Activated T-helper 1 cell treated with anti-CD3 and anti-CD28 coated beads, Interleukin-12 subunit alpha, Interleukin-12 subunit beta, Interleukin-2, Interleukin-4 antibody, amounts not matched to agents 30 ng/mL and 10 ng/mL and 1 ng/mL, durations not matched to agents 14 hours and 24 hours and 36 hours (primary cell): ENCODE measurements at regions of chr16 and their contacts with region 1.

Region 1: DNA sequence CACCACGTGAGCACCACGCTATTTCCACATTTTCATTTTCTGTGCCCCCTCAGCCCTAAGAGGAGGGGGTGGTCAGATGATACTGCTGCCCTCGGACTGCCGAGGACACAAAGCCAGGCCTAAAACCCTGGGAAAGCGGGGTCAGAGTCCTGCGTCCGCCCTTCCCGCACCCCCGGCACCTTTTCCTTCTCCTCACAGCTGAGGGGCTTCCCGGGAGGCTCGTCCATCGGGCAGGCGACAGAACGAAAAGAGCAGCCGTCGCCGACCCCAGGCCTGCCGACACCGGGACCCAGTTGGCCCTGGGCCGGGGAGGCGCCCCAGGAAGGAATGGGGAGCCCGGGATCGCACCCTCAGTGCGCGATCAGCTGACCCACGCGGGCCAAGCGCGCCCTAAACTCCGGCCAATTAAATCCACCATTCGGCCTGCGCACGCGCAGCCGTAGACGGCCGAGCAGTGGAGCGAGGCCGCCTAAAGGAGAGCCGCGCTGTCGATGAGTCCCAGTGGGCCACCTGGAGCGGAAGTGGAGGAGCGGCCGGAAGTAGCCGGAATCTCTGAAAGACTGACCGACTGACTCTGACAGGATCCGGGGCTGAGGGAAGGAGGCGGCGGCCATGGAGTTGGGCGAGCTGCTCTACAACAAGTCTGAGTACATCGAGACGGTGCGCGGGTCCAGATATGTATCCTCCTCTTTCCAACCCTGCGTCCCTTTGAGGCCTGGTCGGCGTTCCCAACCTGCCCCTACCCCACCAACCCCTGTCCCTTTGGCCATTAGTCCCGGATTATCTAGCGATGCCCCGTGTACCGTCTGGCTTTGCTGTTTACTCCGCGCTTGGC is at the starts of genes DCTN5 and PALB2:
- DNase-seq: peak; percentile 90
- H3K4me3 Mint-ChIP-seq: peak within 1 kb of the TSS; percentile 98
- H3K27ac Mint-ChIP-seq: peak within 1 kb of the TSS; percentile 97
- H3K4me1 Mint-ChIP-seq: peaks cover 31% of the 10 kb centered on the region
- H3K27me3 Mint-ChIP-seq: no peaks in the 10 kb centered on the region
- total RNA-seq, gene DCTN5: 102 and 105 TPM in 2 replicates
- total RNA-seq, gene PALB2: 34.4 and 36.2 TPM in 2 replicates

Region 2: GRCh38 chr16:23504451-23505179 is 136.5 kb before region 1 on chr16:
- intact Hi-C with region 1: loop called (anchors 2 kb)
- DNase-seq: peak; percentile 68
- H3K4me3 Mint-ChIP-seq: peak overlapping the region; percentile 46
- H3K27ac Mint-ChIP-seq: peak overlapping the region; percentile 79
- H3K4me1 Mint-ChIP-seq: peaks cover 72% of the 10 kb centered on the region
- H3K27me3 Mint-ChIP-seq: no peaks in the 10 kb centered on the region

Region 3: DNA sequence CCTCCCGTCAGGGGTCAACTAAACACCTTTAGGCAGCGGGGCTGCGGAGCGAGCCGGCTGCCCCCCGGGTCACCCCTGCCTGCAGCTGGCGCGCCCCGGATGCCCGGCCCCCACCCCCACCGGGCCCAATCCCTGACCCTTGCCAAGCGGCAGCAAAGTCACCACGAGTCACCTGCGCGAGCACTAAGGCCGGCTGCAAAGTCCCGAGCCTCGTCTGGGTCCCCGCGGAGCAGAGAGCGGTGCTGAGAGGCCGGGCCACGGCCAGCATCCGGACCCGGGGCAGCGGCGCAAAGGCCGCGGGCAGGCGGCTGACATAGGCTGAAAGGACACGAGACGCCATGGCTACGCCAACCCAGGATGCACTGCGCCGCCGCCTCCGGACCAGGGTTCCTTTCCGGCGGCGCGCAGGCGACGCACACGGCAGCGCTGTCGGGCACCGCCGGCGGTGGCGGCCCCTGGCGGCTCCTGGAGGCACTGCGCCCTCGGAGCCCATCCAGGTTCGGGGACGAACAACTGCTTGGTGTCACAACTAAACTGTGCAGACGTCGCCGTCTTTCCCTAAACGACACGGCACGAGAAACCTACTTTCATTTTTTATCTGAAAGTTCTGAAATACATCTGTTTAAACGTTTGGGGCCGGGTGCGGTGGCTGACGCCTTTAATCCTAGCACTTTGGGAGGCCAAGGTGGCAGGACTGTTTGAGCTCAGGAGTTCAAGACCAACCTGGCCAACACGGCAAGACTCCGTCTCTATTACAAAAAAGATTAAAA is 45.0 kb before region 1 on chr16 and contains the start of gene NDUFAB1:
- intact Hi-C with region 1: loop called (anchors 1 kb)
- DNase-seq: peak; percentile 90
- H3K4me3 Mint-ChIP-seq: peak within 1 kb of the TSS; percentile 88
- H3K27ac Mint-ChIP-seq: peak within 1 kb of the TSS; percentile 80
- H3K4me1 Mint-ChIP-seq: peaks cover 30% of the 10 kb centered on the region
- H3K27me3 Mint-ChIP-seq: no peaks in the 10 kb centered on the region
- total RNA-seq, gene NDUFAB1: 146 and 148 TPM in 2 replicates

Region 4: GRCh38 chr16:23670137-23670776 is 29.1 kb after region 1 on chr16:
- intact Hi-C with region 1: loop called (anchors 1 kb)
- DNase-seq: peak; percentile 62
- H3K4me3 Mint-ChIP-seq: no peak overlapping the region
- H3K27ac Mint-ChIP-seq: peak overlapping the region; percentile 38
- H3K4me1 Mint-ChIP-seq: peaks cover 29% of the 10 kb centered on the region
- H3K27me3 Mint-ChIP-seq: no peaks in the 10 kb centered on the region

Region 5: DNA sequence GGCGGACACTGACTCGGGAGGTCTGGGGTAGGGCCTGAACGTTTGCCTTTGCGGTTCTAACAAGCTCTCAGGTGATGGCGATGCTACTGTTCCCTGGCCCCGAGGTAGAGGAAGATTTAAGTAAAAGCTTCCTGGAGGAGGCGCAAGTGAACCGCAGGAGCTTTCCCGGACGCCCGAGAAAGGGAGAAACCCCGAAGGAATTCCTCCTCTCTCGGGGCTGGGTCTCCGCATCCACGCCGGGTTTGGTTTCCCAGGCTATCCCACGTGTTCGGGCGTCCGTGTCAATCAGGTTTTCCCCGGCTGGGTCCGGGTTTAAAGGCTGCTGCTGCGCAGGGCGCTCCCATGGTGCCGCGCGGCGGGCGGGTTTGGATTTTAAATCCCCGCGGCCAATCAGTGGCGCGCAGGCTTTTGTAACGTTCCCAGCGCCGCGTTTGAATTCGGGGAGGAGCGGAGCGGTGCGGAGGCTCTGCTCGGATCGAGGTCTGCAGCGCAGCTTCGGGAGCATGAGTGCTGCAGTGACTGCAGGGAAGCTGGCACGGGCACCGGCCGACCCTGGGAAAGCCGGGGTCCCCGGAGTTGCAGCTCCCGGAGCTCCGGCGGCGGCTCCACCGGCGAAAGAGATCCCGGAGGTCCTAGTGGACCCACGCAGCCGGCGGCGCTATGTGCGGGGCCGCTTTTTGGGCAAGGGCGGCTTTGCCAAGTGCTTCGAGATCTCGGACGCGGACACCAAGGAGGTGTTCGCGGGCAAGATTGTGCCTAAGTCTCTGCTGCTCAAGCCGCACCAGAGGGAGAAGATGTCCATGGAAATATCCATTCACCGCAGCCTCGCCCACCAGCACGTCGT is 37.5 kb after region 1 on chr16 and contains the start of gene PLK1:
- intact Hi-C with region 1: loop called (anchors 1 kb)
- DNase-seq: peak; percentile 81
- H3K4me3 Mint-ChIP-seq: peak within 1 kb of the TSS; percentile 94
- H3K27ac Mint-ChIP-seq: peak within 1 kb of the TSS; percentile 84
- H3K4me1 Mint-ChIP-seq: peaks cover 34% of the 10 kb centered on the region
- H3K27me3 Mint-ChIP-seq: no peaks in the 10 kb centered on the region
- total RNA-seq, gene PLK1: 45.2 and 54.7 TPM in 2 replicates

Region 6: DNA sequence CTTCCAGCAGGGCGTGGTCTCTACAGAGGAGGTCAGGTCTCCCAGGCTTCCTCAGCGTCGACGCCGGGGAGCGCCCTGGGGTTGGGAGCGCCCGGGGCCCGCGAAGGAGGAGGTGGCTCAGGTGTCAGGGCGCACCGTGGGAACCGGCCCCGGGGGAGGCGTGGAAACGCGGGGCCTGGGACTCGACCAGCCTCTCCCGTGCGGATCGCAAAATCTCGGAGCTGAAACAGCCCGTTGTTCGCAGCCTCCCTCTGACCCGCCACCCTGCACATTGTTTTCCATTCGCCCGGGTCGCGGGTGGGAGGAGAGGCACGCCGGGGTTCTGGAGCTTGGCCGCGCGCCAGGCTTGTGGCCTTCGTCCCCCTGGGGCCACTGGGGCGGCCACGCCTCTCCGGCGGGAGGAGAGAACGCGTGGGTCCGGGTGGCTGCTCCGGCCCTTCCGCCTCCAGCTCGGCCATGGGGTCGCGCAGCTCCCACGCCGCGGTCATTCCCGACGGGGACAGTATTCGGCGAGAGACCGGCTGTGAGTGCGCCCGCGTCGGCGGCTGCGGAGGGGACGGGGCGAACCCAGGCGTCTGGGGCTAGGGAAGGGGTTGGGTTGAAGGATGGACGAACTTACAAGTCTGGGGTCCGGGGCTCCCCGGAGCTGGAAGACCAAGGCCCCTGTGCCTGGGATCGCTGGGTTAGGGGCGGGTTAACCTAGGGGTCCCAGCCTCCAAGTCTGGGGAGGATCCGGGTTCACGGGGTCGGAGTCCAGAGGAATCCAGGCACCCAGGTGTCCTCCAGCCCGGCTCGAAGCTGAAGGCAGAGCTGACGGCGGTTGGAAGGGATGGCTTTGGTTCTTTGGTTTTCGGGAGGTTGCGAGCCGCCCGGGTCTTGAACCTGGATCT is 113.7 kb after region 1 on chr16 and contains the start of gene CHP2:
- intact Hi-C with region 1: no loop called
- DNase-seq: no peak
- H3K4me3 Mint-ChIP-seq: no peak within 1 kb of the TSS
- H3K27ac Mint-ChIP-seq: no peak within 1 kb of the TSS
- H3K4me1 Mint-ChIP-seq: no peaks in the 10 kb centered on the region
- H3K27me3 Mint-ChIP-seq: peaks cover 56% of the 10 kb centered on the region
- total RNA-seq, gene CHP2: not detected in 2 replicates

Region 7: DNA sequence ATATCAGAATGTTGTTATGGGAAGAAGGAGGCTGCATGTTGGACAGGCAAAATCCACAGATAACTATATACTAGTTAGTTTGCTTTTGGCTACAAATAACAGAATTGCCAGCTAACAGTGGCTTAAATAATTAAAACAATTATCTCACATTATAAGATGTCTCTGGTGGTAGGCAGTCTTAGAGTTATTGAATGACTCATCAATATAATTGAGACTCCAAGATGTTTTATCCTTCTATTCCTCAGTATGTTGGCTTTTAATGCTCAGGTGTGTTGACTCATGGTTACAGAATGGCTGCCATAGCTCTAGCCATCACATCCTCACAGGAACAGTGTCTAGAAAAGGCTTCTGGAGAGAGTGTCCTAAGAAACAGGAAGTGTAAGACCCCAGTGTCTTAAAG is 124.8 kb after region 1 on chr16:
- intact Hi-C with region 1: no loop called
- DNase-seq: no peak
- H3K4me3 Mint-ChIP-seq: no peak overlapping the region
- H3K27ac Mint-ChIP-seq: no peak overlapping the region
- H3K4me1 Mint-ChIP-seq: no peaks in the 10 kb centered on the region
- H3K27me3 Mint-ChIP-seq: peaks cover under 1% of the 10 kb centered on the region